B cell (primary cell): ENCODE measurements at regions of chr9 and their contacts with region 1.

Region 1: GRCh38 chr9:115591584-115591984 is 473.6 kb upstream of the TNC start:
- DNase-seq: no peak
- ATAC-seq: no peak
- H3K4me3 ChIP-seq: no peak overlapping the region
- H3K4me3 Mint-ChIP-seq: no peak overlapping the region
- H3K27ac ChIP-seq: no peak overlapping the region
- H3K27ac Mint-ChIP-seq: no peak overlapping the region
- H3K4me1 ChIP-seq: no peaks in the 10 kb centered on the region
- H3K4me1 Mint-ChIP-seq: no peaks in the 10 kb centered on the region
- H3K27me3 ChIP-seq: peaks cover 0 to 5% (median 0%) of the 10 kb centered on the region in 4 experiments
- H3K27me3 Mint-ChIP-seq: peaks cover 17% of the 10 kb centered on the region
- CTCF ChIP-seq: no peak

Region 2: GRCh38 chr9:116193636-116194035 is 602.1 kb after region 1 on chr9:
- CTCF ChIA-PET with region 1: no interaction called
- POLR2A ChIA-PET with region 1: no interaction called
- intact Hi-C with region 1: no loop called
- DNase-seq: no peak
- ATAC-seq: no peak
- H3K4me3 ChIP-seq: no peak overlapping the region
- H3K4me3 Mint-ChIP-seq: no peak overlapping the region
- H3K27ac ChIP-seq: no peak overlapping the region
- H3K27ac Mint-ChIP-seq: no peak overlapping the region
- H3K4me1 ChIP-seq: no peaks in the 10 kb centered on the region
- H3K4me1 Mint-ChIP-seq: no peaks in the 10 kb centered on the region
- H3K27me3 ChIP-seq: no peaks in the 10 kb centered on the region
- H3K27me3 Mint-ChIP-seq: no peaks in the 10 kb centered on the region
- CTCF ChIP-seq: no peak

Region 3: GRCh38 chr9:116646661-116647512 is 1055.3 kb after region 1 on chr9:
- CTCF ChIA-PET with region 1: no interaction called
- POLR2A ChIA-PET with region 1: no interaction called
- intact Hi-C with region 1: loop called (anchors 5 kb)
- DNase-seq: peak; percentile 5
- ATAC-seq: no peak
- H3K4me3 ChIP-seq: no peak overlapping the region
- H3K4me3 Mint-ChIP-seq: no peak overlapping the region
- H3K27ac ChIP-seq: no peak overlapping the region
- H3K27ac Mint-ChIP-seq: no peak overlapping the region
- H3K4me1 ChIP-seq: no peaks in the 10 kb centered on the region
- H3K4me1 Mint-ChIP-seq: no peaks in the 10 kb centered on the region
- H3K27me3 ChIP-seq: no peaks in the 10 kb centered on the region
- H3K27me3 Mint-ChIP-seq: no peaks in the 10 kb centered on the region
- CTCF ChIP-seq: no peak

Region 4: DNA sequence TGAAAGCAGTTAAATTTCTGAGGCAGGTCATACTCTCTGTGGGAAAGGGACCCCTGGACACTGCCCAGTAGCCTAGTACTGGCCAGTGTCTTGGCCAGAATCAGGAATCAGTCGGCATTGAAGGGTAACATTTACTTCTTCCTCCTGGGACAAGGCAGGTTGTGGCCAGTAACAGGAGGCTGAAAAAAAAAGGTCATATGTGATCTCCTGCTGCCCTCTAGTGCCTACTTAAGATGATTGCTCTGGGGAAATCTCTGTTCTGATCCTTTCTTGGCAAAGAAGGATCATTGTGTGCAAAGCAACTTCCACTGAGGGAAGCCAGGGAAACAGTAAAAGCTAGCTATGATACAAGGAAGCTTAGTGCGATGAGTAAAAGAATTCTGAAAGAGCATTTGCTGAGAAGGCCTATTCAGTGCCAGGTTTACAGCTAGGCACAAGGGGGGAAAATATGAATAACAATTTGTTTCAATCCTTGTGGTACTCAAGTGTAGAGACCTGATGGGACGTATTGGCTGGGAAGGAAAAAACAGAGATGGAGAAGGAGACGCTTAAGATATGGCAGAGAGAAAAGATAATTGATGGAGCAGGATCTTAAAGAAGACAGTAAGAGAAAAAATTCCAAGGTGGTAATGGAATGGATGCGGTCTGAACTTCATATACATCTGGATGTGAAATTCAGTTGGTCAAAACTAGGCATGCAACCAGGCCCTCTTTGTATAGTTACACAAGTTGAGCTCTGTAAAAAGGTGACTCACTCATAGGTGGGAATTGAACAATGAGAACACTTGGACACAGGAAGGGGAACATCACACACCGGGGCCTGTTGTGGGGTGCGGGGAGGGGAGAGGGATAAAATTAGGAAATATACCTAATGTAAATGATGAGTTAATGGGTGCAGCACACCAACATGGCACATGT is 1069.7 kb after region 1 on chr9:
- CTCF ChIA-PET with region 1: interaction called, 22 read pairs
- POLR2A ChIA-PET with region 1: no interaction called
- intact Hi-C with region 1: no loop called
- DNase-seq: peak; percentile 48
- ATAC-seq: peak; percentile 45
- H3K4me3 ChIP-seq: no peak overlapping the region
- H3K4me3 Mint-ChIP-seq: no peak overlapping the region
- H3K27ac ChIP-seq: no peak overlapping the region
- H3K27ac Mint-ChIP-seq: no peak overlapping the region
- H3K4me1 ChIP-seq: no peaks in the 10 kb centered on the region
- H3K4me1 Mint-ChIP-seq: no peaks in the 10 kb centered on the region
- H3K27me3 ChIP-seq: no peaks in the 10 kb centered on the region
- H3K27me3 Mint-ChIP-seq: no peaks in the 10 kb centered on the region
- CTCF ChIP-seq: peak; percentile 71